Activated CD8-positive, alpha-beta T cell treated with anti-CD3 and anti-CD28 coated beads for 36 hours (primary cell): ENCODE measurements at regions of chr12 and their contacts with region 1.

Region 1: DNA sequence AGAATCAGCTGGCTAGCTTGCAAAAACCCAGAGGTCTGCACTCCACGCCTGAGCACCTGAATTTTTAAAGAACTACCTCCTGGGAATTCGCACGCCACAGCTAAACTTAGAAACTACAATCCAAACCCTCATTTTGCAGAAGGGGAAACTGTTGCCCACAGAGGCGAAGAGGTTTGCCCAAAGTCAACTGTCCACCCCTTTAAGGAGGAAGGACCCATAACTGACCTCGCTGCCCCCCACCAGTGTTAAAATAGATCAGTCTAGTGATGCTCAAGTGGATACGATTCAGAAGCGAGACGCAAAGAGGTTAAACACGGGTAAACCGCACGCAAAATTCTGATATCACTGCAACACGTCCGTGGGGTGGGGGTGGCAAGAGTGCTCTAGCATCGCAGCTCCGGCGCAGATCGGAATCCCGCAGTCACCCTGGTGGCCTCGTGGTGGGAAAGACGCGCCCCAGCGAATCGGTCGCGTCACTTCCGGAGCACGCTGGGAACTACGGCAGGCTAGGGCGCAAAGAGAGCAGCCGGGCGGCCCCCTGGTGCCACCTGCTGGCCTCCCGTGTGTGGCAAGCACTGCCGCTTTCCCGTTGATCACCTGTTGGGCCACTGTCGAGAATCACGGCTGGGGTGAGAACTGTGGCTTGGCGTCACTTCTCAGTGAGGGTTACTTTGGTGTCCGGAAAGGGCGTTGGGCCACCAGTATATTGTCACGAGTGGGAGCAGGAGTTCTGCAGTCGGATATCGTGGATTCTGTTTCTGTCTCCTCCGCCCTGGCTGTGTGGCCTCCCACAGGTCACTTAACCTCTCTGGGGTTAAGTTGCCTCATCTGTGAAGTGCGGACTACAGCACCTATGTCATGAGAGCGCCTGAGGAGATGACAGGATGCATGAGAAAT is at the start of gene ALKBH2:
- DNase-seq: peak; percentile 96
- ATAC-seq: peak; percentile 73
- H3K4me3 Mint-ChIP-seq: peak within 1 kb of the TSS; percentile 81
- H3K27ac Mint-ChIP-seq: peak within 1 kb of the TSS; percentile 91
- H3K4me1 Mint-ChIP-seq: peaks cover 36% of the 10 kb centered on the region
- H3K27me3 Mint-ChIP-seq: no peaks in the 10 kb centered on the region
- CTCF ChIP-seq: peak; percentile 92
- total RNA-seq, gene ALKBH2: 35.6 to 37.8 TPM

Region 2: GRCh38 chr12:108633534-108634248 is 459.6 kb before region 1 on chr12 and contains the start of gene SELPLG:
- CTCF ChIA-PET with region 1: no interaction called
- POLR2A ChIA-PET with region 1: no interaction called
- intact Hi-C with region 1: loop called (anchors 10 kb)
- DNase-seq: peak; percentile 94
- ATAC-seq: peak; percentile 52
- H3K4me3 Mint-ChIP-seq: peak within 1 kb of the TSS; percentile 91
- H3K27ac Mint-ChIP-seq: peak within 1 kb of the TSS; percentile 100
- H3K4me1 Mint-ChIP-seq: peaks cover 62% of the 10 kb centered on the region
- H3K27me3 Mint-ChIP-seq: no peaks in the 10 kb centered on the region
- CTCF ChIP-seq: no peak
- total RNA-seq, gene SELPLG: 22.1 to 23.8 TPM

Region 3: GRCh38 chr12:108884116-108885012 is 208.9 kb before region 1 on chr12:
- CTCF ChIA-PET with region 1: interaction called, 12 read pairs
- POLR2A ChIA-PET with region 1: no interaction called
- intact Hi-C with region 1: loop called (anchors 5 kb)
- DNase-seq: peak; percentile 89
- ATAC-seq: peak; percentile 83
- H3K4me3 Mint-ChIP-seq: no peak overlapping the region
- H3K27ac Mint-ChIP-seq: no peak overlapping the region
- H3K4me1 Mint-ChIP-seq: no peaks in the 10 kb centered on the region
- H3K27me3 Mint-ChIP-seq: no peaks in the 10 kb centered on the region
- CTCF ChIP-seq: peak; percentile 70

Region 4: GRCh38 chr12:109052414-109053323 is 40.6 kb before region 1 on chr12 and contains the start of gene USP30:
- CTCF ChIA-PET with region 1: interaction called, 8 read pairs
- POLR2A ChIA-PET with region 1: interaction called, 7 read pairs
- intact Hi-C with region 1: loop called (anchors 2 kb)
- DNase-seq: peak; percentile 87
- ATAC-seq: peak; percentile 76
- H3K4me3 Mint-ChIP-seq: peak within 1 kb of the TSS; percentile 81
- H3K27ac Mint-ChIP-seq: peak within 1 kb of the TSS; percentile 93
- H3K4me1 Mint-ChIP-seq: peaks cover 10% of the 10 kb centered on the region
- H3K27me3 Mint-ChIP-seq: no peaks in the 10 kb centered on the region
- CTCF ChIP-seq: no peak
- total RNA-seq, gene USP30: 7.4 to 10.0 TPM